WTC11 (cell line): ENCODE measurements at regions of chr6 and their contacts with region 1.

Region 1: DNA sequence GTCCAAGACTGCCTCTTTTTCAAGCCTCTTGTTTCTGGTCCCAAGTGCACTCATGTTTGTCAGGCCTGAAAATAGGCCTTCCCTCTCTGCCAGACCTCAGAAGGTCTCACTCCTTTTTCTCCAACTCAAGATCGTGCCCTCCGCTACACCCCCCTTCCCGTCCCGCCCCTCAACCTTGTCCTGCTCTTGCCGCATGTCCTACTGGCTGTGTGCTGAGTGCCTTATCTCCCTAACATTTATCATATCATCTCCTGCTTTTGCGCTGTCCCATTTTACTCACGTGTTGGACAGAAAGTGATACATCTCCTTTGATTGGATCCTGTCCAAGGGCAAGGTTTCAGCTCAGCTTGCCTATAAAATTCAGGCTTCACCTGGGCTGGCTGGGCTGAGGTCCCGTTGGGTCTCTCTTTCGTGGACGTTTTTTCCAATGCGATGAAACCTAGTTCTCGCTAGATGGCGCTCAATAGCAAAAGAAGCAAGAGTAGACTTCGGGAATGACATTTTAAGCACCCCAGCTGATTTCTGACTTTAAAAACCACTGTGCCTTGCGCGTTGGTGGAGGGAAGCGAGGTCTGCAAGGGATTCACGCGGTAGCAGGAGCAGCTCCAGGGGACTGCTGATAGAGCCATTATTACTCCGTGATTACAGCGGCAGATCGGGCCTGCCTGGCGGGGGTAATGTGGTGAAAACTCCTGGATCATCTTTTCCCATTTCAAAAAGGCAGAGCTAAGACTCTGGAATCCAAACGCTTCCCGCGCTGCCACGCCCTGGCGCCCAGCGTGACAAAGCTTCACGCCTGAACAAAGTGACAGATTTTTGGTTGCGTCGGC is 137.6 kb downstream of the IMPG1 start:
- DNase-seq: peak; percentile 46
- ATAC-seq: peak; percentile 75
- H3K4me3 Mint-ChIP-seq: peak overlapping the region; percentile 66
- H3K27ac Mint-ChIP-seq: peak overlapping the region; percentile 67; the same call in 1 of the 2 replicates
- H3K4me1 Mint-ChIP-seq: peaks cover 11% of the 10 kb centered on the region
- H3K27me3 Mint-ChIP-seq: peaks cover 71% of the 10 kb centered on the region
- CTCF ChIP-seq: peak; percentile 70

Region 2: DNA sequence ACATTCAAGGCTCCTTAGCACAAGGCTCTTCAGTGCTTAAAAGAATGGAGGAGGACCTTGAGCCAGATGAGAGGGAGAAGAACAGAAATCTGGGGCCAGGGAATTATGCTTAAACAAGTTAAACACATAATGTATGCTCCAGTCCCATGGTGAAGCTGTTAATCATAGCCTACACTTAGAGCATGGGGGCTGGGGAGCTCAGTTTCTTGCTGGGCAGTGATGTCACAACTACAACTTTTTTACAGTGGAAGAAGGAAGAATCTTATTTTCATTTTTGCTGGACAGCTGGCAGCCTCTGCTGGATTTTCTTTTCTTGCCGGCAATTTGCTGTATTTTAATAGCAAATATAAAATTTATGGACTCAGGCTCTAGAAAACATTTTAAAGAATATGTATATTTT is 1806.3 kb before region 1 on chr6:
- CTCF ChIA-PET with region 1: no interaction called
- POLR2A ChIA-PET with region 1: no interaction called
- DNase-seq: no peak
- ATAC-seq: no peak
- H3K4me3 Mint-ChIP-seq: no peak overlapping the region
- H3K27ac Mint-ChIP-seq: no peak overlapping the region
- H3K4me1 Mint-ChIP-seq: no peaks in the 10 kb centered on the region
- H3K27me3 Mint-ChIP-seq: no peaks in the 10 kb centered on the region
- CTCF ChIP-seq: no peak

Region 3: DNA sequence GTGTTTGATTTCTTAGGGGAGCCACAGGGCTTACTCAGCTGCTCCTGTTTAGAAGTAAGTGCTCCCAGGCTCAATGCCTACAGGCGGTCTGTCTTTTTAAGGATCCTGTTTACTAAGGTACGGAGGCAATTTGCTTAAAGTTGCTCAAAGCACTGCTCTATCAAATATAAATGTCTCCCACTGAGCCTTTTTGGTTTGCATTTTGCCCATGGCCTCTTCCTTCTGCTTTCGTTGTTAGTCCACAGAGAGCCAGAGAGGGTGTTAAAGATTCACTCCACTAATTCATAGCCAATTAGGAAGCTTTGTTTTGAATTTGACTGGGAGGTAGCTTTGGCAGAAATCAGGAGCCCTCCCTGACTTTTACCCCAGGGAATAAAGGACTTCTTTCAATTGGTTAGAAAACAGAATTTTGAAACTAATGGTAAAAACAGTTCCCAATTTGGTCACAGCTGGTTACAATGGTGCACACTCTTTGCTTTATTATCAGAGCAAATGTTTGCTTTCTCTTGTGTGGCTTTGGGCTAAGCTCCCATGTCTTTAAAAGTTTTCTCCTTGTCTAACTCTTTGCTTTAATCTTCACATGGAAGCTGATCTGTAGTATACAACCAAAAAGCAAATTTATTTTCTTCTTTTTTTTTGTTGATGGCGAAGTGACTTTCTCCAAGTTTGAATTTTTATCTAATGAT is 11.4 kb after region 1 on chr6:
- CTCF ChIA-PET with region 1: interaction called, 16 read pairs
- POLR2A ChIA-PET with region 1: no interaction called
- DNase-seq: no peak
- ATAC-seq: peak; percentile 71
- H3K4me3 Mint-ChIP-seq: no peak overlapping the region
- H3K27ac Mint-ChIP-seq: no peak overlapping the region
- H3K4me1 Mint-ChIP-seq: peaks cover 26% of the 10 kb centered on the region
- H3K27me3 Mint-ChIP-seq: peaks cover 75% of the 10 kb centered on the region
- CTCF ChIP-seq: no peak

Region 4: DNA sequence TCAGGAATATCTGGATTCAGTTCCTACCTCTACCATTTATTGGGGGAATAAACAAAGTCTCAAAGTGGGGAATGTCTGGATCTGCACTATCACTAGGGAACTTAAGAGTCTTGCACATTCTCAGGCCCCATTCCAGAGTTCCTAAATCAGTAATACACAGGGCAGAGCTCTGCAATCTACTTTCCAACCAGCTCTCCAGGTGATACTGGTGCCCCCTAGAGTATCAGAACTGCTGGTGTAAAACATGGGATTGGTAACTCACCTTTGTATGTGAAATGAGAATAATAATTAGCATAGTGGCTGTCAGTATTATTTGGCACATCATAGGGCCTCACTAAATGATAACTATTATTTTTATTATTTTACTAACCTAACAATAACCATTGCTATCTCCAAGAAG is 416.4 kb after region 1 on chr6:
- CTCF ChIA-PET with region 1: interaction called, 18 read pairs
- POLR2A ChIA-PET with region 1: no interaction called
- DNase-seq: no peak
- ATAC-seq: peak; percentile 91
- H3K4me3 Mint-ChIP-seq: no peak overlapping the region
- H3K27ac Mint-ChIP-seq: no peak overlapping the region
- H3K4me1 Mint-ChIP-seq: peaks cover 4% of the 10 kb centered on the region
- H3K27me3 Mint-ChIP-seq: no peaks in the 10 kb centered on the region
- CTCF ChIP-seq: peak; percentile 36; the same call in 1 of the 2 replicates